Uterus (tissue), 4 donors: ENCODE measurements at regions of chr1 and their contacts with region 1.

Region 1: GRCh38 chr1:152052606-152053005 is 15.8 kb upstream of the S100A11 start:
- DNase-seq: peak; percentile 80 to 86
- H3K4me3 ChIP-seq: no peak overlapping the region
- H3K27ac ChIP-seq: no peak overlapping the region
- H3K4me1 ChIP-seq: peaks cover 0 to 9% of the 10 kb centered on the region in 2 donors
- H3K27me3 ChIP-seq: no peaks in the 10 kb centered on the region
- CTCF ChIP-seq: peak; percentile 78 to 90 (median 88)
- POLR2A ChIP-seq: no peak

Region 2: DNA sequence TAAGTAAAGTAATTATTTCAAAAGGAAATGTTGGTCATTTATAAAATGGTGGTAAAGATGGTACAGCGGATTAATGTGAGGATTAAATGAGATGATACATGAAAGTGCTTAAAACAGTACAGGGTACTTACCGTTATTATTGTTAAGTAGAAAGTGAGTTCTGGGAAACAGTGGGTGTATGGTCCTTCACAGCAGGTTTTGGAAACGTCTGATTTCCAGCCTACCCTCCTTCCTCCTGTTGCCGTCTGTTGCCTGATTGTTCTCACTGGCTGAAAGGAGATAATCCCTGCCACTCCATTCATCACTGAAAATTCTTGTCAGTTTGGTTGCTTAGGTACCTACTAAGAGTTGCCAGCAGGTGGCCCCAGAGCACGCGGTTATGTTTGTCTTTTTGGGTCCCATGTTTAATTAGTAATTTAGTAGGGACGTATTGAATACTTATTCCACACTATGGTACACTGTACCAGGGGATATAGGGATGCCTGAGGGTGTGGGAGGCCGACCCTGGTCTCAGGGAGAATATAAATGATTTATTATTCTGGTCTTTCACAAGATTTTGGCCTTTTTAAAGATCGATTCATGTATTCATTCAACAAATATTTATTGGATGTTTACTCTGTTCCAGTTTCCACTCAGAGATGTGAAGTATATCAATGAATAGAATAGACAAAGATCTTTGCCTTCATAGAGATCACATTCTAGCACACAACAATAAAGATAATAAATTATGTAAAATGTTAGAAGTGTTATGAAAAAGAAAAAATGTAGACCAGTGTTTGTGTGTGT is 137.2 kb after region 1 on chr1:
- intact Hi-C with region 1: loop called (anchors 10 kb)
- DNase-seq: peak; percentile 25 to 27
- H3K4me3 ChIP-seq: peak overlapping the region; percentile 39 to 44
- H3K27ac ChIP-seq: peak overlapping the region; percentile 54 to 74
- H3K4me1 ChIP-seq: no peaks in the 10 kb centered on the region
- H3K27me3 ChIP-seq: no peaks in the 10 kb centered on the region
- CTCF ChIP-seq: peak; percentile 36 to 63 (median 42)
- POLR2A ChIP-seq: no peak